GM18951 (cell line): ENCODE measurements at regions of chr16 and their contacts with region 1.

Region 1: DNA sequence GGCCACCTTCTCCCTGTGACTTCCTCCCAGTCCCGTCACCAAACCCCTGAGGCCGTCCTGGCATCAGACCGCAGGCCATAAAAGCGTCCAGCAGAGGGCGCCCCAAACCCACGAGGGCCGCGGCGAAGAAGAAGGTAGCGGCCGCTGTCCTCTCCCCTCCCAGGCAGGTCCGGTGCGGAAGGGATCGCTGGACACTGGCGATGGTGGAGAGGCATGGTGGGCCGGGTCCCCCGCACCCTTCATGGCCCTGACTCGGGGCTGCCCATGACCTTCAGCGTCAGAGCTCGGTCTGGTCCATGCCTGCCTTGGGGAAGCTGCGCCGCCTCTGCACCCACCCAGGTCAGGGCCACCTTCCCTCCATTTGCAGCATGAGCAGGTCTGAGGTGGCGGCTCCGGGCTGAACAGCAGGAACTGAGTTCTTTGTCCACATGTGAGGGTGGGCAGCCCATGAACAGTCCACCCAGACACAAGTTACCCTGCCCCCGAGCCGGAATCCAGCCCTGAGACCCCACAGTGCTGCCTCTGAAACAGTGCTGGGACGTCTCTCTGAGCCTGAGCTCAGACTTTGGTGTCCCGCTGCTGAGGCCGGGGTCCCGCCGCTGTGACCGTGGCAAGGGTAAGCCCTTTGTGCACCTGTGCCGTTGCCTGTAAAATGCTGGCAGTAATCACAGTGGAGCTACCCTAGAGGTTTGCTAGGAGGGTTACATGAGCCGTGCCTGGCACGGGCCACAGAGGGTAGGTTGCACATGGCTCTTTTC is 40.8 kb upstream of the CMIP start:
- POLR2A ChIP-seq: no peak

Region 2: GRCh38 chr16:81214745-81215166 is 189.0 kb before region 1 on chr16:
- in situ Hi-C with region 1: no loop called
- POLR2A ChIP-seq: no peak

Region 3: GRCh38 chr16:81616321-81617055 is 212.7 kb after region 1 on chr16:
- in situ Hi-C with region 1: loop called (anchors 10 kb)
- POLR2A ChIP-seq: no peak

Region 4: GRCh38 chr16:81879625-81880024 is 475.8 kb after region 1 on chr16:
- in situ Hi-C with region 1: no loop called
- POLR2A ChIP-seq: no peak